Heart left ventricle (tissue), 16 donors: ENCODE measurements at regions of chr9 and their contacts with region 1.

Region 1: GRCh38 chr9:27732494-27732893 is 159.2 kb upstream of the C9orf72 start:
- DNase-seq: no peak
- ATAC-seq: no peak
- H3K4me3 ChIP-seq: no peak overlapping the region
- H3K27ac ChIP-seq: no peak overlapping the region
- H3K4me1 ChIP-seq: no peaks in the 10 kb centered on the region
- H3K27me3 ChIP-seq: no peaks in the 10 kb centered on the region
- CTCF ChIP-seq: no peak
- POLR2A ChIP-seq: no peak

Region 2: GRCh38 chr9:27791311-27791710 is 58.8 kb after region 1 on chr9:
- intact Hi-C with region 1: loop called in 1 of 10 experiments (anchors 10 kb)
- DNase-seq: no peak
- ATAC-seq: no peak
- H3K4me3 ChIP-seq: no peak overlapping the region
- H3K27ac ChIP-seq: no peak overlapping the region
- H3K4me1 ChIP-seq: no peaks in the 10 kb centered on the region
- H3K27me3 ChIP-seq: no peaks in the 10 kb centered on the region
- CTCF ChIP-seq: no peak
- POLR2A ChIP-seq: no peak

Region 3: DNA sequence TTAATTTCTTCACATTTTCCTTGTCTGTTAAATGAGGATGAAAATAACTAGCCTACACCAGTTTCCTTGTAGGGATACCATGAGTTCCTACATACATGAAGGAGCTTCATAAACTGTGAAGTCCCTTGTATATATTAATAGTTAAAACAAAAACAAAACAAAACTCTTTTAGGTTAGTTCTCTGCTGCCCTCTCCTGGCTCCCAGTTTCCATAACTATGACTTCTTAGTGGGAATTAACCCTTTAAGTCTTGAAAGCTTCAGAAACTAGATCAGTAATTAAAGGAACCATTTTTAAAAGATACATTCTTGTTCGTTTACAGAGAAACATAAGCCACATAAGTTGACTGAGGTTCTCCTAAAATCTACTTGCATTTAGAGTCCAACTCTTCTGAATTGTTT is 340.8 kb after region 1 on chr9:
- intact Hi-C with region 1: loop called (anchors 5 to 10 kb)
- DNase-seq: peak in 2 of 5 donors; percentile 6 to 16
- ATAC-seq: no peak
- H3K4me3 ChIP-seq: no peak overlapping the region
- H3K27ac ChIP-seq: no peak overlapping the region
- H3K4me1 ChIP-seq: no peaks in the 10 kb centered on the region
- H3K27me3 ChIP-seq: no peaks in the 10 kb centered on the region
- CTCF ChIP-seq: peak; percentile 10 to 55 (median 40)
- POLR2A ChIP-seq: no peak

Region 4: DNA sequence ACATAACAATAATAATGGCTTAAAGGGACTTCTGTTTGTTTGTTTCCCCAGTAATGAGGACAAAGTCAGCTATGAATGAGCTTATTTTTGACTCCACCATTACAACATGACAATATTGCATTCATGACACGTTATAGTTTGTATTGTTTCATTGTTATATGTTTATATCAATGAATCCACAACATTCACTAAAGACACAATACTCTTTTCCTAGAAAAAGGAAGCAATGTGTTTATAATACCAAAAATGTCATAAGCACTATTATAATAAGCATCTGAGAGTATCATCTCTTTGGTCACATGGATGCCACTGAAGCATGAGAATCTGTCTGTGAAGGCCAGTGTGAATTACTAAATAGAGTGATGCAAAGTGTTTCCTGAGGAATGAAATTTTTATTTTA is 867.7 kb after region 1 on chr9:
- intact Hi-C with region 1: loop called in 1 of 10 experiments (anchors 10 kb)
- DNase-seq: no peak
- ATAC-seq: no peak
- H3K4me3 ChIP-seq: no peak overlapping the region
- H3K27ac ChIP-seq: no peak overlapping the region
- H3K4me1 ChIP-seq: no peaks in the 10 kb centered on the region
- H3K27me3 ChIP-seq: no peaks in the 10 kb centered on the region
- CTCF ChIP-seq: no peak
- POLR2A ChIP-seq: no peak